HepG2 (cell line): ENCODE measurements at regions of chr19 and their contacts with region 1.

Region 1: DNA sequence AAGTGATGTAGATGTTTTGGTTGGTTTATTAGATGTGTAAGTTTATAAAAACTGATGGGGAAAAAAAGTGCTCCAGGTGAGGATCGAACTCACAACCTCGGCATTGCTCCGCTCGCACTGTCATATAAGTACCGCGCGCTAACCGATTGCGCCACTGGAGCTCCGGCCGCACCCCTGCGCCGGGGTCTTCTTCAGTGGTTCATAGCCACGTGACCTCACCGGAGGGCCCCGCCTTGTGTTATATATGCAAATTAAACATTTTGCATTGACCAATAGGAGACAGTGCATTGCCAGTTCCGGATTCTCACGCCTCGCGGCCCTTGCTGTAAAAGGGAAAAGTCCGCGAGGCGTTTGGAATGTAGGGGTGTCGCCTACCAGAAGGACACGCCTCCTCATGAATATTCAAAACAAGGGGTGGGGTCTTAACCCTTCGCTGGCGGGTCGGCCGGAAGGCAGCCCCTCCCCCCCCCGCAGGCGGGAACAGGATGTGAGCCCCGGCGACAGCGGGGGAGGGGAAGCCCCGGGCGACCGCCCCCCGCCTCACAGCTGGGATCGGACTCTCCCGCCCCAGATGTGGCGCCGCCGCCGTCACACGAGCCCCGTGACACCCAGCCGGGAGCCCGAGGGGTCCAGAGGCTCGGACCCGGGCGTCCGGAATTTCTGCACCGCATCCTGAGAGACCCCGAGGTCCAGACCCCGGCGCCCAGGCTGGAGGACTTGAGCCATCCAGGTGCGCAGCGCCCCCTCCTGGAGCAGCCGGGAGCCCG is at the start of gene PLEKHG2:
- DNase-seq: peak; percentile 98
- ATAC-seq: peak; percentile 57
- H3K4me3 ChIP-seq: peak within 1 kb of the TSS; percentile 70 to 97 (median 95)
- H3K27ac ChIP-seq: peak within 1 kb of the TSS; percentile 81
- H3K4me1 ChIP-seq: peaks cover 61% of the 10 kb centered on the region
- H3K27me3 ChIP-seq: no peaks in the 10 kb centered on the region; a peak in 1 of 5 replicates
- CTCF ChIP-seq: peak; percentile 89
- EP300 ChIP-seq: peak in 1 of 2 experiments; percentile 35; a peak in 2 of 4 replicates
- POLR2A ChIP-seq: peak; percentile 48 to 63; a peak in 3 of 4 replicates
- RAD21 ChIP-seq: peak; percentile 83
- total RNA-seq, gene PLEKHG2: 3.6 and 5.2 TPM in 2 replicates

Region 2: DNA sequence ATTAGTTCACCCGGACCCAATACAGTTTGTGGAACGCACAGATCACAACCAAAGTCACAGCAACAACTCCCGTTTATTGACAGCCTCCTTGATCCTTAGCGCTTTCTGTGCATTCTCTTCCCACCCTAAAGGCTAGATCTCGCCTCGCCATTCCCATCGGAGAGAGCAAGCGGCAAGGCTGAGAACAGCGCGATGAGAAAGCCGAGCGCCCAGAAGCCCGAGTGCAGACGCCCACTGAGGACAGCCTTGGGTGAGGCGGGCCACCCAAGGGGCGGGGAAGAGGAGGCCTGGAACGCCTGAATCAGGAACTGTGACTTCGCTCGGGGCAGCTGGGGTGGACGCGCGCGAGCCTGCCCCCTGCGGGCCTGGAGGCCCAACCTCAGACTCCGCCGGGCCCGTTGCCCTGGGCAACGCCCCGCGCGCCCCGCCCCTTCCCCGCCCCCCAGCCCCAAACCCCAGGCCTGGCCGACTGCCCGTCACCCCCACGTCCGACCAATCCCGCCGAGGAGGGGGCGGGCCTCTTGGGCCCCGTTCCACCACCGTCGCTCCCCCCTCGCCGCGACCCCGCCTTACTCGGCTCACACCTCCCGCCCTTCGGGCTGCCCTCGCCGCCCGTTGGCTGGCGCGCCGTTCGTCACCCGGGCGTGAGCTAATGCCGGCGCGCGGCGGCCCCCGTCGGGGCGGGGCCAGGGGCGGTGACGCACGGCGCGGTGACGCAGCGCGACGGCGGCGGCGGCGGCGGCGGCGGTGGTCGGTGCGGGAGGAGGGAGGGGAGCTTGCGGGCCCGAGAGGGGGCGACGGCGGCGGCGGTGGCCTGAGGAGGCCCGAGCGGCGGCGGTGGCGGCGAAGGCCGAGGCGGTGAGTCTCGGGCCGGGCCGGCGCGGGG is 70.3 kb before region 1 on chr19 and contains the start of gene SAMD4B:
- CTCF ChIA-PET with region 1: interaction called, 4 read pairs
- POLR2A ChIA-PET with region 1: interaction called, 4 read pairs
- in situ Hi-C with region 1: no loop called
- intact Hi-C with region 1: loop called (anchors 5 kb)
- DNase-seq: peak; percentile 92
- ATAC-seq: peak; percentile 94
- H3K4me3 ChIP-seq: peak within 1 kb of the TSS; percentile 84 to 94 (median 88)
- H3K27ac ChIP-seq: peak within 1 kb of the TSS; percentile 74
- H3K4me1 ChIP-seq: peaks cover 69% of the 10 kb centered on the region
- H3K27me3 ChIP-seq: no peaks in the 10 kb centered on the region; a peak in 1 of 5 replicates
- CTCF ChIP-seq: peak; percentile 86
- EP300 ChIP-seq: 0 out of 4 replicates have a peak, but pooled peaks of 1 of the 2 experiments have one; percentile 20
- POLR2A ChIP-seq: peak; percentile 90 to 96
- RAD21 ChIP-seq: peak; percentile 49
- total RNA-seq, gene SAMD4B: 26.0 and 29.1 TPM in 2 replicates

Region 3: DNA sequence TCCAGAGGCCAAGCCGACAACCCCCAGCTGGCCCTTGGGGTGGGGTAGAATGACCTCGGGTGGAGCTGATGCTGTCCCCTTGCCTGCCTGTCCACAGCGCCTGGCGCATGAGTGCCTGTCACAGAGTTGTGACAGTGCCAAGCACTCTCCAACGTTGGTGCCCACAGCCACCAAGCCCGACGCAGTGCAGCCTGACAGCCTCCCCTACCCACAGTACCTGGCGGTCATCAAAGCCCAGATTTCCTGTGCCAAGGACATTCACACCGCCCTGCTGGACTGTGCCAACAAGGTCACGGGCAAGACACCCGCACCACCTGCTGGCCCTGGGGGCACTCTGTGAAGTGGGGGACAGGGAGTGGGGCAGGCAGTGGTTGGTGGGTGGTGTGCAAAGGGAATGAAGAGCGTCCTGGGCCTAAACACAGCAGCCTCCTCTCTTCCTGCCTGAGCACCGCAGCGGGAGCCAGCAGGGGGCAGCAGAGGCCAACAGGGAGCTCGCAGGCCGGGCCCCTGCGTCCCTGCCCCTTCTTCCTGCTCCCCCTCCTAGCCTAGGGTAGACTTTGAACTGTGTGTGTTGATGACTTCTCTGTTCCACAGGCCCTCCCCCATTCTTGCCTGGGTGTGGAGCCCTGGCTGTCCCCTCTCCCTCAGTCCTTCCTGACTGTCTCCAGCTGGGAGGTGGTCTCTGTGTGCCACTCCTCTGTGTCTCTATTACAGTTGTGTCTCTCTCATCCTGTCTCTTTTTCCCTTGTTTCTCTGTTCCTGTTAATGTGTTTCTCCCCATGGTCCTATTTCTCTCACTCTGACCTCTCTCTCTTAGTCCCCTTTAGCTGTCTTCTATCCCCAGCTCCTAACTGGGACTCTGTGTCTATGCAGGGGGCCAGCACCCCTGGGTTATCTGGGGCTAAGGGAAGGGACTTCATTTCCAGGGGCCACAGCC is 14.7 kb before region 1 on chr19:
- CTCF ChIA-PET with region 1: interaction called, 127 read pairs
- POLR2A ChIA-PET with region 1: interaction called, 123 read pairs
- in situ Hi-C with region 1: no loop called
- intact Hi-C with region 1: loop called (anchors 1 kb)
- DNase-seq: peak; percentile 95
- ATAC-seq: peak; percentile 72
- H3K4me3 ChIP-seq: peak overlapping the region; percentile 29 to 57 (median 34)
- H3K27ac ChIP-seq: peak overlapping the region; percentile 98
- H3K4me1 ChIP-seq: peaks cover 59% of the 10 kb centered on the region
- H3K27me3 ChIP-seq: no peaks in the 10 kb centered on the region
- CTCF ChIP-seq: peak; percentile 100
- EP300 ChIP-seq: peak; percentile 45 to 66; a peak in 3 of 4 replicates
- POLR2A ChIP-seq: peak; percentile 89 to 95
- RAD21 ChIP-seq: peak; percentile 100

Region 4: DNA sequence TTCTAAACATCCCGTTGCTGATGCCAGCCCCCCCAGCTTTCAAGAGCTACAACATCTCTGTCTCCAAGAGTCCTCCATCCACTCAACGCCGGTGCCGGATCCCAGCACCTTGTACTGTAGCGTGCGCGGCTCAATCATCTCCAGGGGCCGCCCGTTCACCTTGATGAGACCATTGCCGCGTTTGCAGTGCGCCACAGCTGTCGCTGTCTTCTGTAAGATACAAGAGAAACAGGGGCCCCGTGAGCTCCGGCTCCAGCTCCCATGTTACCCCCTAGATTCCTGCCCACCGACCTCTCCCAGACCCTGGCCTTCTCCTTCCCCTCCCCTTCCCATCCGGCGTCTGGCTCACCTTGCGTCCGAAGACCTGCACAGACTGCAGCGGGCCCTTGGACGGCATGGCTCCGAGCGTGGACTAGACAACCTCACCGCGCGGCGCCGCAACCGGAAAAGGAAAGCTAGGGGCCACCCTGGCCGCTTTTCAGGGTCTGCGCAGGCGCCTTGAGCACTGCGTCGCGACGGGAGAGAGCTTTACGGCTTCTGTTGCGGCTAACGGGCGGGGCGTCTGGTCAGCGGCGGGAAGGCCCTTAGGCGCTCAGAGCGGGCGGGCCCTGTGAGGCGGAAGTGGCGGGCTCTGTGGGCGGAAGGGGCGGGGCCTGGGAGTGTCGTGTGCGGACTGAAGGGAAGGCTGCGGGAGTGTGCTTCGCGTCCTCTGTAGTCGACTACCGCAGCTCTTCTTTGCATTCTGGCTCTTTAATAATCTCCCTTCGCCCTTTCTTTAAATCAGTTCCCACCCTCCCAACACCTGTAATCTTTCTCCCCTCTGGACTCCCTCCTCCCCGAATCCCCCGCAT is 23.4 kb after region 1 on chr19 and contains the start of gene RPS16:
- CTCF ChIA-PET with region 1: interaction called, 3 read pairs
- POLR2A ChIA-PET with region 1: interaction called, 47 read pairs
- in situ Hi-C with region 1: no loop called
- intact Hi-C with region 1: no loop called
- DNase-seq: peak; percentile 94
- ATAC-seq: peak; percentile 89
- H3K4me3 ChIP-seq: peak within 1 kb of the TSS; percentile 91 to 100 (median 99)
- H3K27ac ChIP-seq: peak within 1 kb of the TSS; percentile 88
- H3K4me1 ChIP-seq: peaks cover 76% of the 10 kb centered on the region
- H3K27me3 ChIP-seq: no peaks in the 10 kb centered on the region; a peak in 1 of 5 replicates
- CTCF ChIP-seq: peak; percentile 18; the same call in 1 of the 2 replicates
- EP300 ChIP-seq: peak; percentile 13 to 31; a peak in 2 of 4 replicates
- POLR2A ChIP-seq: peak; percentile 98
- RAD21 ChIP-seq: no peak; the same call in none of the 2 replicates
- total RNA-seq, gene RPS16: 488 and 790 TPM in 2 replicates

Region 5: DNA sequence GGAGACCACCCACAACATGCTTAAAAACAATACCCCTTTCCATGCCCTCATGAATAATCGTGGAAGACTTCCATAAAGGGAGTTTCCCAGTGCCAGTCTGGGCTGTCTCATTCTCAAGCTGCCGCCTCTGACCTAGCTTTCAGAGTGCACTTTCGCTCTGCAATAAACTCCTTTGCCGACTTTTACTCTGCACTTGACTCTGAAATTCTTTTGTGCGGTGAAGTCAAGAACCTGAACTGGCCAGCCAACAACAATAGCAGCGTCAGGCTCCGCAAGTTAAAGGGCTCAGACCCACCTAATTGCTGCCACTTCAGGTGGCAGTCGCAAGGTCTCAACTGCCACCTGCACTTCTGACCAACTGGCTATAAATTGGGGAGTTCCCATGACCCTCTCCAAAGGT is 356.1 kb after region 1 on chr19:
- CTCF ChIA-PET with region 1: no interaction called
- POLR2A ChIA-PET with region 1: no interaction called
- in situ Hi-C with region 1: no loop called
- intact Hi-C with region 1: no loop called
- DNase-seq: no peak
- ATAC-seq: no peak
- H3K4me3 ChIP-seq: no peak overlapping the region
- H3K27ac ChIP-seq: no peak overlapping the region
- H3K4me1 ChIP-seq: no peaks in the 10 kb centered on the region
- H3K27me3 ChIP-seq: peaks cover 0 to 1% of the 10 kb centered on the region in 2 experiments; a peak in 3 of 5 replicates
- CTCF ChIP-seq: no peak
- EP300 ChIP-seq: no peak
- POLR2A ChIP-seq: no peak
- RAD21 ChIP-seq: no peak